ENCODE measurements at regions of chrX and their contacts with region 1.

Region 1: DNA sequence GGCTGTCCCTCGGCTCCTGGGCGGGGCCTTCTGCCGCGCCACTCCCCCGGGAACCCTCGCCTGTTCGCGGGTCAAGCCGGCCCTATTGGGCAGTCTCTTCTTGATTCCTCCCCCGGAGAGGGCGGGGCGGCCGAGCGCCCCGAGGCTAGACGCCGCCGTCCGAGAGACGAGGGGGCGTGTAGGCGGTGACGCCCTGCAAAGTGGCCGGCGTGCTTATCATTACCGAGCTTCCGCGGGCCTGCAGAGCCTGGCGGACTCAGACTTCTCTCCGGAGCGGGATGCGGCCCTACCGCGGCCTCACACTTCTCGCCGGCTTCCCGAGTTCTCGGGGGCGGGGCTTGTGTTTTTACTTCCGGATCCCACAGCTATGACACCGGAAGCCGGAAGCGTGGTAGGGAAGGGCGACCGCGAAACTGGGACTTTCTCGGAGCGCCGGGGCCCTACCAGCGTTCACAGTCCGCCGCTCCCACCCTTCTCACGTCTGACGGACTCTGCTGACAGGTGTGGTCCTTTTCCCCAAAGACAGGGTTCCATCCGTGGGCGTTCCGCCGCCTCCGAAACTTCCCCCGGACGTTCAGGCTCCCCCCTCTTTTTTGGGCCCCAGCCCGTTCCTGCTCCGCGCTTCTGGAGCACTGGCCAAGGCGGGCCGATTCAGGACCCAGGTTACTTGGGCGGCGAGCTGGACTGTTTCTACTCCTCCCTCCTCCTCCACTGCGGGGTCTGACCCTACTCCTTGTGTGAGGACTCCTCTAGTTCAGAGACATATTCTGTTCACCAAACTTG is at the start of gene IKBKG:
- DNase-seq: peak; percentile 93
- H3K4me3 Mint-ChIP-seq: peak within 1 kb of the TSS; percentile 97
- H3K27ac Mint-ChIP-seq: peak within 1 kb of the TSS; percentile 96
- H3K4me1 Mint-ChIP-seq: peaks cover 63% of the 10 kb centered on the region
- H3K27me3 Mint-ChIP-seq: no peaks in the 10 kb centered on the region
- total RNA-seq, gene IKBKG: 42.2 to 42.6 TPM

Region 2: DNA sequence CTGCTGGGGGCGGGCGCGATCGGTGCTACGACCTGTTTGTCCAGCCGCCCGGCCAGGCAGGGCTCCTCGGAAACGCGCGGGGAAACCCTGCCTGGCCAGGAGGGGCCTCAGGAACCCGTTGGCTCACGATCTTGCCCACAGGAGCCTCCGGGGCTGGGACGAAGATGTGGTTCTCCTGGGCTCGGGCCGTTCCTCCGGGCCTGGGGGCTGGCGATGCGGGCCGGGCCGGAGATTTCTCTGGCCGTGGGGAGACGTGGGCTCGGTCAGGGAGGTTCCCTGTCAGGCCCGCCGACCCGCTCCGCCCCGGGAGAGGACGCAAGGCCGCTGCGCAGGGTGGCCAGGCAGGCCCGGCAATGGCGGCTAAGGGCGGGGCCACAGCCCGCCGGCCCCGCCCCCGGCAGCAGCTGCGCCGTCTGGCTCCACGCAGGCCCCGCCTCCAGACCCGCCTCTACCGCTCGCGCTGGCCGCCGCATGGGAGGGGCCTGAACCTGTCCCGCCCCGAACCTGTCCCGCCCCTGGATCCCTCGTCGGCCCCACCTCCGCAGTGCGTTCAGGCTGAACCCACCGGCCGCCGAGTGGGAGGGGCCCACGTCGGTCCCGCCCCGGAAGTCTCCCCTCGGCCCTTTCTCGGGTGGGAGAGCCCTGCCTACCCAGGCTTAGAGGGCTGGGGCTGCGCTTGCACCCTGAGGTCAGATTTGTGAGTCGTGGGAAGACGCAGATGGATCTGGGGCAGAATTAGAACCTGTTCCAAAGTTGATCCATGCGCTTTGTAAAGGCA is 31.4 kb before region 1 on chrX and contains the start of gene FAM3A:
- CTCF ChIA-PET with region 1: no interaction called
- intact Hi-C with region 1: loop called (anchors 2 kb)
- DNase-seq: peak; percentile 95
- H3K4me3 Mint-ChIP-seq: peak within 1 kb of the TSS; percentile 83
- H3K27ac Mint-ChIP-seq: peak within 1 kb of the TSS; percentile 79
- H3K4me1 Mint-ChIP-seq: peaks cover 23% of the 10 kb centered on the region
- H3K27me3 Mint-ChIP-seq: no peaks in the 10 kb centered on the region
- total RNA-seq, gene FAM3A: 17.8 to 21.4 TPM

Region 3: GRCh38 chrX:154526901-154527675 is 20.3 kb before region 1 on chrX:
- CTCF ChIA-PET with region 1: interaction called, 8 read pairs
- intact Hi-C with region 1: loop called (anchors 2 kb)
- DNase-seq: peak; percentile 84
- H3K4me3 Mint-ChIP-seq: no peak overlapping the region
- H3K27ac Mint-ChIP-seq: peak overlapping the region; percentile 79
- H3K4me1 Mint-ChIP-seq: peaks cover 15% of the 10 kb centered on the region
- H3K27me3 Mint-ChIP-seq: no peaks in the 10 kb centered on the region

Measured in activated naive CD4-positive, alpha-beta T cell treated with anti-CD3 and anti-CD28 coated beads for 36 hours (primary cell).